ENCODE measurements at regions of chr7 and their contacts with region 1.

Region 1: DNA sequence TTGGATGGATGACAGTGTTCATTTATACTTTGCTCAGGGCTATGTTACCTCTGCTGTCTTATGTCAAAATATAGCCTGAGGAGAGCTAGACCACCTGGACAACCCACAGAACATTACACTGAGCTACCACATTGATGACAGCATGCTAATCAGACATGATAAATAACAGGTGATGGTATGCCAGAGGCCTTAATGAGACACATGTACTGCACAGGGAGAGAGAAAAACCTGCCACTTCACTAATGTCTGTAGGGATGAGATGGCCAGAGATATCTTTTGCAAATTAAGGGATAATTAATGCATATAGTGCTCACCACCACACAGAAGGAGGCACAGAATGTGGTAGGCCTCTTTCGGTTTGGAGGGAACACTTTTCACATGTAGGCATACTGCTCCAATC is 1122.6 kb upstream of the POT1 start:
- DNase-seq: no peak
- ATAC-seq: no peak
- H3K4me3 Mint-ChIP-seq: no peak overlapping the region
- H3K27ac Mint-ChIP-seq: no peak overlapping the region
- H3K4me1 Mint-ChIP-seq: no peaks in the 10 kb centered on the region
- H3K27me3 Mint-ChIP-seq: no peaks in the 10 kb centered on the region

Region 2: GRCh38 chr7:126079581-126079980 is 27.4 kb after region 1 on chr7:
- CTCF ChIA-PET with region 1: no interaction called
- POLR2A ChIA-PET with region 1: no interaction called
- intact Hi-C with region 1: loop called in 1 of 2 experiments (anchors 2 kb)
- DNase-seq: no peak
- ATAC-seq: no peak
- H3K4me3 Mint-ChIP-seq: no peak overlapping the region
- H3K27ac Mint-ChIP-seq: no peak overlapping the region
- H3K4me1 Mint-ChIP-seq: no peaks in the 10 kb centered on the region
- H3K27me3 Mint-ChIP-seq: no peaks in the 10 kb centered on the region